T-cell (primary cell): ENCODE measurements at regions of chr1 and their contacts with region 1.

Region 1: DNA sequence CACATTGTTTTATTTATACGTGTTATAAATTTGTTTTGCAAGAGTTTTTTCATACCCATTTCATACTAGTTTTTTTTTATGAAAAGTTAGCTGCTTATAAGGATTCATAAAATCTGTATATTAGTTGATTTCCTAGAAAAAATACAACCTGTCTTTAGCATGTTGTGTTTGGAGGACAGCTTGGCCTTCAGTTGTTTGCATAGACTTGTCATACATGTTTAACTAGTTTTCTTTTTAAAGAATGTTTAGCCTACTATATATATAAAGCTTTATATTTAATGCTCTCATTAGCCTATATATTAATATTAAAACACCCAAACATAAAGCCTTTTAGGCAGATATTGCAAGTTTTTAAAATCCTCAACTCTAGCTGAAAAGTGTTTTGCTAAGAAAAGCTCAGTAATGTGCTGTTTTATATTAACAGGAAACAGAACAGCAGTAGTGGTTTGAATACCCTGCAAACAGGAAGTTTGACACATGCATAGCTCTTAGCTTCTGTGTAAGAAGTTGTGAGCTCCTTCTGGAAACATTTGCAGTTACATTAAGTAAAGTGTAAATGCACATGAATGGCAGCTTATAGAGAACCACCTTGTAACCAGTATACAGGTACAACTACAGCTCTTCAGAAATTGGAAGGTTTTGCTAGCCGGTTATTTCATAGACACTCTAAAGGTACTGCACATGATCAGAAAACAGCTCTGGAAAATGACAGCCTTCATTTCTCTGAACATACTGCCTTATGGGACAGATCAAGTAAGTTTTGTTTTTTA is at the start of gene PRKACB:
- DNase-seq: peak in 8 of 35 experiments; percentile 11 to 75 (median 14)
- ATAC-seq: peak; percentile 88 to 97 (median 93)
- H3K4me3 ChIP-seq: peak within 1 kb of the TSS; percentile 57 to 69
- H3K4me3 Mint-ChIP-seq: peak within 1 kb of the TSS; percentile 93 to 97 (median 97)
- H3K27ac ChIP-seq: peak within 1 kb of the TSS; percentile 69
- H3K27ac Mint-ChIP-seq: peak within 1 kb of the TSS; percentile 99
- H3K4me1 ChIP-seq: peaks cover 6 to 41% of the 10 kb centered on the region in 2 experiments
- H3K4me1 Mint-ChIP-seq: peaks cover 33 to 53% (median 36%) of the 10 kb centered on the region in 3 donors
- H3K27me3 ChIP-seq: no peaks in the 10 kb centered on the region
- H3K27me3 Mint-ChIP-seq: no peaks in the 10 kb centered on the region
- total RNA-seq, gene PRKACB: 101 to 119 (median 109) TPM

Region 2: GRCh38 chr1:84027368-84027767 is 116.6 kb before region 1 on chr1:
- CTCF ChIA-PET with region 1: no interaction called
- POLR2A ChIA-PET with region 1: no interaction called
- DNase-seq: no peak
- ATAC-seq: no peak
- H3K4me3 ChIP-seq: no peak overlapping the region
- H3K4me3 Mint-ChIP-seq: no peak overlapping the region
- H3K27ac ChIP-seq: no peak overlapping the region
- H3K27ac Mint-ChIP-seq: no peak overlapping the region
- H3K4me1 ChIP-seq: no peaks in the 10 kb centered on the region
- H3K4me1 Mint-ChIP-seq: no peaks in the 10 kb centered on the region
- H3K27me3 ChIP-seq: no peaks in the 10 kb centered on the region
- H3K27me3 Mint-ChIP-seq: peaks cover 7 to 10% of the 10 kb centered on the region in 2 donors

Region 3: DNA sequence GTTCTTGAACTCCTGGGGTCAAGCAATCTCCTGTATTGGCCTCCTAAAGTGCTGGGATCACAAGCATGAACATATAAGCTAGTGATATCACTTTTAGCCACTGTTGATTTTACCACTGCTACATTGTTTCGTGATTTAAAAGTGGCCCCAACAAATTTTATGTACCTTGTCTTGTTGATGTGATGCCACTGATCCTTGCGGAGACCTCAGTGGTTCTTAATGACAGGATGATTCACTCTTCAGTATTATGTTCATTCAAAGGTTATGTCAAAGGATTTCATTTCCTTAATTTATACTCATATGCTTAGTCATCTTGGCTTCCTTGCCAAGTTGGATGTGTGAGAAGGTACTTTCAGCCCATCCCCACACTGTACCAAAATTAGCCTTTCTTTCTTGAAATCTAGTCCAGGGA is 12.2 kb after region 1 on chr1:
- CTCF ChIA-PET with region 1: interaction called, 3 to 11 read pairs
- POLR2A ChIA-PET with region 1: interaction called in 1 of 2 experiments, 3 read pairs
- DNase-seq: no peak
- ATAC-seq: peak in 3 of 4 experiments; percentile 26 to 41 (median 40)
- H3K4me3 ChIP-seq: no peak overlapping the region
- H3K4me3 Mint-ChIP-seq: peak overlapping the region in 1 of 3 donors; percentile 60
- H3K27ac ChIP-seq: no peak overlapping the region
- H3K27ac Mint-ChIP-seq: peak overlapping the region in 1 of 2 donors; percentile 7
- H3K4me1 ChIP-seq: peaks cover 20 to 39% of the 10 kb centered on the region in 2 experiments
- H3K4me1 Mint-ChIP-seq: peaks cover 88 to 99% (median 92%) of the 10 kb centered on the region in 3 donors
- H3K27me3 ChIP-seq: no peaks in the 10 kb centered on the region
- H3K27me3 Mint-ChIP-seq: no peaks in the 10 kb centered on the region

Region 4: DNA sequence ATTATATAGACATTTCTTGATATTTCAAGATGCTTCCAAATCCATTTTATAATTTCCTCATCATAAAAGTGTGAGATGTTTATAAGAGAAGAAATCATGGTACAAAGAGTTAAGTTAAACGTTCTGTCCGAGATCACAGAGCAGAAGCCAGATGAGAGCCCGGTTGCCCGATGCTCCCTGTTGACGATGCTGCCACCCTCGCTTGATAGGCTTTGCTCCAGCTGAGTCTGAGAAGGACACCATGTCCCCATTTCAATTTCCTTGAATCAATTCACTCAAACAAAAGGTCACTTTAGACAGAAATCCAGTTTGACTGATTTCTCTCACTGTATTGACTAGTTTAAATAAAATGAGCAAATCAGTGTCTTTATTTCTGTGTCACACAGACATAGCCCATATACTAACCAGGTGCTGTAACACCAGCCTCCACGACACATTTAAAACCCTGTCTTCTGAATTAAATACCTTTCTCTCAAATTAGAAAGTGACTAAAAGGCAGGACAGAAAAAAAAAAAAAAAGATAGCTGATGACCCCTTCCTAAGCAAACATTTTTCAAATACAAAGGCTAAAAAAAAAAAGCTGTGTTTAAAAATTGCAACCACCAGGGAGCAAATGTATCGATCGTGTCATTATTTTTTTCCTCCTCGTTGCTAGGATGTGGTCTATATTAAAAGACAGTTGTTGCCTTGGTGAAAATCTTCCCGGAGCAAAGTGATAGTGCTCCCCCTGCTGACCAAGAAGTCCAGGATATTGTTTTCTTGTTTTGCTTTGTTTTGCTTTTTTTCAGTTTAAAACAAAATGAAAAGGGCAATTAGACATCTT is 289.5 kb after region 1 on chr1:
- CTCF ChIA-PET with region 1: interaction called, 48 to 151 read pairs
- POLR2A ChIA-PET with region 1: interaction called, 8 to 12 read pairs
- DNase-seq: peak in 34 of 35 experiments; percentile 17 to 90 (median 47)
- ATAC-seq: peak; percentile 61 to 88 (median 72)
- H3K4me3 ChIP-seq: peak overlapping the region in 1 of 2 donors; percentile 29
- H3K4me3 Mint-ChIP-seq: peak overlapping the region in 2 of 3 donors; percentile 62 to 72
- H3K27ac ChIP-seq: peak overlapping the region; percentile 61
- H3K27ac Mint-ChIP-seq: no peak overlapping the region
- H3K4me1 ChIP-seq: peaks cover 24 to 40% of the 10 kb centered on the region in 2 experiments
- H3K4me1 Mint-ChIP-seq: peaks cover 5 to 11% (median 11%) of the 10 kb centered on the region in 3 donors
- H3K27me3 ChIP-seq: no peaks in the 10 kb centered on the region
- H3K27me3 Mint-ChIP-seq: no peaks in the 10 kb centered on the region

Region 5: DNA sequence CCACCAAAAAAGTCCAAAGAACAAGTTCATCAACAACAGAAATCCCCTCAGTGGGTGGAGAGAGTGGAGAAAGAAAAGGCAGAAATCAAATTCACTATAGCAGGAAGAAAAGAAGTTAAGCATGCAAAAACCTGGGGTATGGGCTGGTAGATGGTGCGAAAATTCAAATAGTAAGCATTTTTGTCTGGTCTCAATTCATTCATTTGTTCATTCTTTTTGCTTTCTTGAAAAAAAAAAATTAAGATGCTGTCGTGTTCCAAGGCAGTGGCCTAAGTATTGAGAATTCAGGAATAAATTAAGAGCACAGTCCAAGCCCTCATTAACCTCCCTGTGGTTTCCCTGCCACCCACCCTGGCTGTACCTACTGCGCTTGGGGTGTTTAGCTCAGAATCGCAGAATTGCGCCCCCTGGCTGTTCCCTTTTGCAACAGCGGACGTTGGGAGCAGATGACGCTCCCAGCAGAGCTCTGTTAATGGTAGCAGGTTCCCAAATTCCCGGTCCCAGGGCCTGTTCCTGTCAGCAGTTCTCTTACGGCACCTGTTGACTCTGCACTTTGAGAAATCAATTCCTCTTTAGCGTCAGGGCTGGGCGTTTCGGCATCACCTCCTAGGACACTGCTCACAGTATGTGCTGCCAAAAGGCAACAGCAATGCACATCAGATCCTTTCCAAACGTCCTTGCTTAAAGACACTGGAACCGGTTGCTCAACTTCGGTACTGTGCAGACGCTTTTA is 580.3 kb after region 1 on chr1:
- CTCF ChIA-PET with region 1: interaction called, 3 to 10 read pairs
- POLR2A ChIA-PET with region 1: interaction called in 1 of 2 experiments, 4 read pairs
- DNase-seq: peak in 33 of 35 experiments; percentile 4 to 68 (median 40)
- ATAC-seq: peak in 3 of 4 experiments; percentile 50 to 63 (median 51)
- H3K4me3 ChIP-seq: no peak overlapping the region
- H3K4me3 Mint-ChIP-seq: no peak overlapping the region
- H3K27ac ChIP-seq: no peak overlapping the region
- H3K27ac Mint-ChIP-seq: no peak overlapping the region
- H3K4me1 ChIP-seq: peaks cover 0 to 4% of the 10 kb centered on the region in 2 experiments
- H3K4me1 Mint-ChIP-seq: no peaks in the 10 kb centered on the region
- H3K27me3 ChIP-seq: peaks cover 0 to 5% of the 10 kb centered on the region in 2 experiments
- H3K27me3 Mint-ChIP-seq: no peaks in the 10 kb centered on the region